ENCODE measurements at regions of chr1 and their contacts with region 1.

Region 1: DNA sequence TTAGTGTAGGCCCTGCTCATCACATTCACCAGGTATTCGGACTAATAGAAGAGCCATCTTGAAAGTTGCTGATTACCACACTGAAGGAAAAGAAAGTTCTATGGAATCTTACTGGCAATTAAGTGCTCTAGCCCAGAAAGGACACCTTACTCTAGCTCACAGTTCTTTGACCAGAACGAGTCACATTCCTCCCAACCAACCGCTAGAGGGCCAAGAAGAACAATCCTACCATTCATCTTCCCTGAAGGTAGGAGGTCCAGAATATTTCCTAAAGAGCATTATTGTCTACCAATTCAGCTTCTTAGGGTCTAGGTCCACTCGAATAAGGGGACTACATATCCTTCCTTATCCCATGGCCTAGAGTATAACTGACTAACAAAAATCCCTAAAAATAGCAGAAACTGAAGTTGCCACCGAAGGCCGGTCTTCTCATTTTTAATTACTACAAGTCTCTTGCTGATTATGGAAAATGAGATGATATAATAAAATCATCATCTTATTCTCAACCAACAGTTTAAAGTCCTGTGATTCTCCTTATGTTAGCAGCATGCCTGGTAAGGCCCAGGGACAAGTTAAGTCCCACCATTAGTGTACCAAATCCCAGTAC is 2.7 kb upstream of the FMO1 start:
- DNase-seq: peak; percentile 36
- ATAC-seq: peak; percentile 90
- H3K4me3 Mint-ChIP-seq: no peak overlapping the region
- H3K27ac Mint-ChIP-seq: no peak overlapping the region
- H3K4me1 Mint-ChIP-seq: peaks cover 18% of the 10 kb centered on the region
- H3K27me3 Mint-ChIP-seq: peaks cover 25% of the 10 kb centered on the region
- CTCF ChIP-seq: peak; percentile 40

Region 2: DNA sequence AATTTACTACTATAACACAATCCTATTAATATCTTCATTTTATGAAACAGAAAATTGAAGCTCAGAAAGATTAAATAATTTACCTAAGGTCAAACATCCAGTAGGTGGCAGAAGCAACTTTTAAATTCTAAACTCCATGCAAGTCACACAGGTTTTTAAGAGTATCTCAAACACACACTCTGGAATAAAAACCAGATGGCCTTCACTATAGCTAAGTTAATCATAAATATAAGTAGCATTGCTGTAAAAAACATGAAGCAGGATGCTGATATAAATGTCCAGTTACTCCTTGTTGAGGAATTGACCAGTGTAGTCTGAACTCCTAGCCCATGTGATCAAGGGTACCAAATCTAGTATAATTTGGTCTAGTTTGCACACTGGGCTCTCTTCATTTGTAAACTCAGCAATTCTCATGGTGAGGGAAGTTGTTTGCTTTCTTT is 164.2 kb before region 1 on chr1:
- CTCF ChIA-PET with region 1: interaction called, 11 read pairs
- POLR2A ChIA-PET with region 1: no interaction called
- DNase-seq: no peak
- ATAC-seq: no peak
- H3K4me3 Mint-ChIP-seq: no peak overlapping the region
- H3K27ac Mint-ChIP-seq: no peak overlapping the region; the same call in 1 of the 2 replicates
- H3K4me1 Mint-ChIP-seq: peaks cover 5% of the 10 kb centered on the region
- H3K27me3 Mint-ChIP-seq: no peaks in the 10 kb centered on the region
- CTCF ChIP-seq: no peak

Region 3: GRCh38 chr1:171226747-171227370 is 18.7 kb before region 1 on chr1:
- CTCF ChIA-PET with region 1: interaction called, 22 read pairs
- POLR2A ChIA-PET with region 1: no interaction called
- DNase-seq: peak; percentile 53
- ATAC-seq: peak; percentile 87
- H3K4me3 Mint-ChIP-seq: no peak overlapping the region
- H3K27ac Mint-ChIP-seq: no peak overlapping the region
- H3K4me1 Mint-ChIP-seq: peaks cover 32% of the 10 kb centered on the region
- H3K27me3 Mint-ChIP-seq: no peaks in the 10 kb centered on the region
- CTCF ChIP-seq: peak; percentile 60

Region 4: GRCh38 chr1:171256940-171257606 is 11.5 kb after region 1 on chr1:
- CTCF ChIA-PET with region 1: interaction called, 47 read pairs
- POLR2A ChIA-PET with region 1: no interaction called
- DNase-seq: no peak
- ATAC-seq: no peak
- H3K4me3 Mint-ChIP-seq: no peak overlapping the region
- H3K27ac Mint-ChIP-seq: no peak overlapping the region
- H3K4me1 Mint-ChIP-seq: peaks cover 26% of the 10 kb centered on the region
- H3K27me3 Mint-ChIP-seq: no peaks in the 10 kb centered on the region; the same call in 1 of the 2 replicates
- CTCF ChIP-seq: no peak

Region 5: DNA sequence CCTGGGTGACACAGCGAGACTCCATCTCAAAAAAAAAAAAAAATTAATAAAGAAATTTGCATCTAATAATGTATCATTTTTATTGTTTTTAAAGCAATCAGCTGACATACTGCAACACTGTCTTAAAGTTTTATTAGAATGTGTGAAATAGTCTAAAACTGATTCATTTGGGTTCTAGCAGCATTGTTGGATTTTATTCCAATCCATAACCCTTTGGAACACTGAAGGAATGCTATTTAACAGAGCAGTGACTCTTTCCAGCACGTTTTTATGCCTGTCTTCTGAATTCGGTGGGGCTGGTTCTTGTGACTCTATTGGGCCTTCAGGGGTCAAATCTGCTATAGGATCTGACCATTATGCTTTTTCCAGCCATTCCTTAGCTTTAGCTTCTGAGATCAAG is 50.3 kb after region 1 on chr1:
- CTCF ChIA-PET with region 1: interaction called, 10 read pairs
- POLR2A ChIA-PET with region 1: no interaction called
- DNase-seq: no peak
- ATAC-seq: no peak
- H3K4me3 Mint-ChIP-seq: no peak overlapping the region
- H3K27ac Mint-ChIP-seq: no peak overlapping the region
- H3K4me1 Mint-ChIP-seq: peaks cover 63% of the 10 kb centered on the region
- H3K27me3 Mint-ChIP-seq: no peaks in the 10 kb centered on the region
- CTCF ChIP-seq: no peak

Region 6: DNA sequence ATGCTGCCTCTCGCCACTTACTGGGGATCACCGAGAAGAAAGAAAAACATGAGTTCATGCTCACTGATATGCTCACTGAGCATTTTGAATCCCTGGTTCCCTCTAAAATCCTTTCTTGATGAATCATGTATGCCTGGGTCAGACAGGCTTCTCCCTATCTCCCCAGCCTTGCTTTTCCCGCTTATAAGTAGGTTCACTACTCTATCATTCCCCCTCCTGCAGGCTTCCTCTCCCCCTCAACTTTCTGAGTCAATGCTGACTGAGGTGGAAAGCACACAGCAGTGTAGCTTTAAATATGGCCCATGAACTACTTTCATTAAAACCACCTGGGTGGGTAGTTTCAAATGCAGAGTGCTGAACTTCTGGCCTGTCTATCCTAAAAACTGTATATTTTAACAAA is 110.2 kb after region 1 on chr1:
- CTCF ChIA-PET with region 1: interaction called, 14 read pairs
- POLR2A ChIA-PET with region 1: no interaction called
- DNase-seq: no peak
- ATAC-seq: no peak
- H3K4me3 Mint-ChIP-seq: no peak overlapping the region
- H3K27ac Mint-ChIP-seq: no peak overlapping the region
- H3K4me1 Mint-ChIP-seq: peaks cover 23% of the 10 kb centered on the region
- H3K27me3 Mint-ChIP-seq: no peaks in the 10 kb centered on the region
- CTCF ChIP-seq: no peak